CD14-positive monocyte (primary cell): ENCODE measurements at regions of chr3 and their contacts with region 1.

Region 1: GRCh38 chr3:127970966-127971592 is 56.0 kb downstream of the KBTBD12 start:
- DNase-seq: peak; percentile 9 to 51 (median 40)
- H3K4me3 ChIP-seq: no peak overlapping the region
- H3K4me3 Mint-ChIP-seq: no peak overlapping the region
- H3K27ac ChIP-seq: no peak overlapping the region
- H3K27ac Mint-ChIP-seq: no peak overlapping the region
- H3K4me1 ChIP-seq: no peaks in the 10 kb centered on the region
- H3K4me1 Mint-ChIP-seq: no peaks in the 10 kb centered on the region
- H3K27me3 ChIP-seq: peaks cover 0 to 5% of the 10 kb centered on the region in 2 donors
- H3K27me3 Mint-ChIP-seq: peaks cover 5 to 15% (median 10%) of the 10 kb centered on the region in 3 donors
- CTCF ChIP-seq: peak; percentile 61

Region 2: DNA sequence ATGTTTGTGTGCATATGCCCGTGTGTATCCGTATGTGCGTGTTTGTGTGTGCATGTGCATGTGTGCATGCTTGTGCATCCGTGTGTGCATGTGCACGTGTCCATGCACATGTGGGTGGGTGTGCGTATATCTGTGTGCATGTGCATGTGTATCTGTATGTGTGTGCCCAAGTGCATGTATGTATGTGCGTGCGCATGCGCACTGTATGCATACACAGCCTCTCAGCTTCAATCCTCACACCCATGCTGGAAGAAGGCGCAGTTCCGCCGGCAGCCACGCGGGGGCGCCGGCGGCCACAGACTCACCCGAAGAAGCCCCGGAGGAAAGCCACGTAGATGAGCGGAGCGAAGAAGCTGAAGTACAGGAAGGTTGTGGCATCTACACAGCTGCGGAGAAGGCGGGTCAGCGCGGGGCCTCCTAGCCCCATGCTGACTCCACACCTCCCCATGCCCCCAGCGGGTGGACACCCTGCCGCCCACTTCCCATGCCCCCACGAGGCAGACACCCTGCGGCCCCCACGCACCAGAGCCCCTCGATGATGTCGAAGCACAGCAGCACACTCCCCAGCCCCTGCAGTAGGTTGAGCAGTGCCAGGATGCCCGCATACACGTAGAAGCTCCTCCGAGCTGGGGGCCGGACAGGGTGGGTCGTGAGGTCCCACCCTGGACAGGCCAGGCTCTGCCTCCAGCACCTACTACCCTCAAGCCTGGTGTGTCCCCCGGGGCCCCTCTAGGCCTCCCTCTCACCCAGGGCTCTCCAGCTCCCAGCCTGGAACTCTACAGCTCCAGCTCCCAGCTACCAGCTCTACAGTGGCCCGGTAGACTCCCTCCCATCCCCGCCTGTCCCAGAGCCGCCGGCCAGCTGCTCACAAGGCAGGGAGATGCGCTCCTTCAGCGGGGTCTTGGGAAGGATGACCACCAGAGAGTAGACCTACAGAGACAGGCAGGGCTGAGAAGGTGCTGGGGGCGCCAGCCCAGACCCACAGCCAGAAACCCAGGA is 395.9 kb before region 1 on chr3:
- intact Hi-C with region 1: loop called in 1 of 2 experiments (anchors 5 kb)
- DNase-seq: peak; percentile 80 to 88 (median 85)
- H3K4me3 ChIP-seq: no peak overlapping the region
- H3K4me3 Mint-ChIP-seq: no peak overlapping the region
- H3K27ac ChIP-seq: no peak overlapping the region
- H3K27ac Mint-ChIP-seq: peak overlapping the region in 4 of 7 donors; percentile 36 to 50 (median 44)
- H3K4me1 ChIP-seq: peaks cover 3 to 5% of the 10 kb centered on the region in 2 donors
- H3K4me1 Mint-ChIP-seq: peaks cover 6% of the 10 kb centered on the region
- H3K27me3 ChIP-seq: no peaks in the 10 kb centered on the region
- H3K27me3 Mint-ChIP-seq: peaks cover 0 to 1% (median 0%) of the 10 kb centered on the region in 3 donors
- CTCF ChIP-seq: peak; percentile 90

Region 3: GRCh38 chr3:127652231-127652995 is 318.7 kb before region 1 on chr3:
- intact Hi-C with region 1: loop called (anchors 5 kb)
- DNase-seq: peak; percentile 38 to 67 (median 66)
- H3K4me3 ChIP-seq: no peak overlapping the region
- H3K4me3 Mint-ChIP-seq: no peak overlapping the region
- H3K27ac ChIP-seq: no peak overlapping the region
- H3K27ac Mint-ChIP-seq: peak overlapping the region in 1 of 7 donors; percentile 20
- H3K4me1 ChIP-seq: no peaks in the 10 kb centered on the region
- H3K4me1 Mint-ChIP-seq: peaks cover 4% of the 10 kb centered on the region
- H3K27me3 ChIP-seq: no peaks in the 10 kb centered on the region
- H3K27me3 Mint-ChIP-seq: peaks cover 2 to 7% (median 2%) of the 10 kb centered on the region in 3 donors
- CTCF ChIP-seq: peak; percentile 94

Region 4: GRCh38 chr3:127857333-127857732 is 113.7 kb before region 1 on chr3:
- intact Hi-C with region 1: no loop called
- DNase-seq: no peak
- H3K4me3 ChIP-seq: no peak overlapping the region
- H3K4me3 Mint-ChIP-seq: no peak overlapping the region
- H3K27ac ChIP-seq: no peak overlapping the region
- H3K27ac Mint-ChIP-seq: no peak overlapping the region
- H3K4me1 ChIP-seq: no peaks in the 10 kb centered on the region
- H3K4me1 Mint-ChIP-seq: peaks cover 6% of the 10 kb centered on the region
- H3K27me3 ChIP-seq: no peaks in the 10 kb centered on the region
- H3K27me3 Mint-ChIP-seq: peaks cover 3 to 6% (median 3%) of the 10 kb centered on the region in 3 donors
- CTCF ChIP-seq: no peak